Endothelial cell of umbilical vein (primary cell): ENCODE measurements at regions of chr2 and their contacts with region 1.

Region 1: GRCh38 chr2:215845839-215846586 is 167.3 kb downstream of the MREG start:
- DNase-seq: peak; percentile 58
- H3K4me3 ChIP-seq: peak overlapping the region in 2 of 3 experiments; percentile 13 to 91
- H3K27ac ChIP-seq: peak overlapping the region; percentile 98
- H3K4me1 ChIP-seq: peaks cover 87% of the 10 kb centered on the region
- H3K27me3 ChIP-seq: no peaks in the 10 kb centered on the region
- CTCF ChIP-seq: no peak
- POLR2A ChIP-seq: peak; percentile 8

Region 2: DNA sequence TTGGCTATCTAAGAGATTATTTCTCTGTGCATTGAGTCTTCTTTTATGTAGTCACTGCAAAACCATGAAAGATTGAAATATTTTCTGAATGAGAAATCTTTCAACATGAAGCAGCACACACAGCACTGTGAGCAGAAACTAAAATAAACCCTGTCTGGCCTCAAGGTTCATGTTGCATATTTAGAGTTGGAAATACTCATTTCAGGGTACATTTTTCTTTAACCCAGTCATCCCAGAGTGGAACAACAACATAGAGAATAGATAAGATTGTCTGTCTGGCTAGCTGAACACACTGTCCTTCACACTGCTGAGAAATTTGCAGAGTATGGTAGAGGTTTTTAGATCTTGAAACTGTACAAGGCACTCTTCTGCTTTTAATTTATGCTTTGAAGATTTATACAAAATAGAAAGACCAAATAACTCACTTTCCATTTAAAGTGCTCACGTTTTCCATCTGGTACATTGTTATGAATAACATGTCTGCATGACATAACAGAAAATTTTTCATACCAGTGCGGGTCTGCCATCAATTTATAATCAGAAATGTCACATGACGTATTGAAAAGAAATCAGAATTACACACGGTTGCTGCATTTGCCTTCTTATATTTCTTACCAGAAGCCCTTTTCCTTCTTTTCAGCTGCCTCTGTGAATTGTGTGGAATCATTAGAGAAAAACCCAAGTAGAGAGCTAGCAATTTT is 385.2 kb before region 1 on chr2:
- CTCF ChIA-PET with region 1: no interaction called
- POLR2A ChIA-PET with region 1: no interaction called
- dilution Hi-C with region 1: no loop called
- intact Hi-C with region 1: loop called (anchors 1 kb)
- DNase-seq: peak; percentile 72
- H3K4me3 ChIP-seq: no peak overlapping the region
- H3K27ac ChIP-seq: peak overlapping the region; percentile 80
- H3K4me1 ChIP-seq: peaks cover 43% of the 10 kb centered on the region
- H3K27me3 ChIP-seq: no peaks in the 10 kb centered on the region
- CTCF ChIP-seq: no peak
- POLR2A ChIP-seq: no peak

Region 3: GRCh38 chr2:215601990-215602721 is 243.9 kb before region 1 on chr2:
- CTCF ChIA-PET with region 1: no interaction called
- POLR2A ChIA-PET with region 1: no interaction called
- dilution Hi-C with region 1: no loop called
- intact Hi-C with region 1: loop called (anchors 2 kb)
- DNase-seq: peak; percentile 97
- H3K4me3 ChIP-seq: peak overlapping the region in 1 of 3 experiments; percentile 19
- H3K27ac ChIP-seq: peak overlapping the region; percentile 85
- H3K4me1 ChIP-seq: peaks cover 24% of the 10 kb centered on the region
- H3K27me3 ChIP-seq: no peaks in the 10 kb centered on the region
- CTCF ChIP-seq: no peak
- POLR2A ChIP-seq: peak; percentile 62

Region 4: DNA sequence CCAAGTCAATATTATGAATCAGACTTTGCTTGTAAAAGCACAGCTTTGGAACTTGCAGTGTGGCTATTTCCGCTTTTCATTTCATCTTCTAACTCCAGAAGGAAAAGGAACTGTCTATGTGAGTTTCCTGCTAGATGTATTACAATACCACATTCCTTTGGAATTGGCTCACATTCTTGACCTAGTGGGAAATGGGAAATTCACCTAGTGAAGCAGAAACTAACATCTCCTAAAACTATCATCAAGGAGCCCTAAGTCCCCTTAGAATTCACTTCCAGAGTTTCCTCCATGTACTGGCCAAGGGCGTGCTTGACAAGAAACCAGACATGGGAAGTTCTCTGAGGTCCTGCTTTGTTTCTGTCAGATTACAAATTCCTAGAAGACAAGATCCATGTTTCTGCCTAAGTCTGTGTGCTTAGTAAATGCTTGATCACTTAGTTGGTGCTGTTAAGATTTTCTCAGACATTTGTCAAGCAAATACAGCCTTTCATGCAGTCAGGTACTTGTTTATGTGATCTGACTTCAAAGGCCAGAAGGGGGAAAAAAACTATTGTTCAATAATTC is 134.5 kb before region 1 on chr2:
- CTCF ChIA-PET with region 1: no interaction called
- POLR2A ChIA-PET with region 1: interaction called, 3 read pairs
- dilution Hi-C with region 1: no loop called
- intact Hi-C with region 1: loop called (anchors 1 kb)
- DNase-seq: peak; percentile 92
- H3K4me3 ChIP-seq: no peak overlapping the region
- H3K27ac ChIP-seq: peak overlapping the region; percentile 98
- H3K4me1 ChIP-seq: peaks cover 51% of the 10 kb centered on the region
- H3K27me3 ChIP-seq: no peaks in the 10 kb centered on the region
- CTCF ChIP-seq: no peak
- POLR2A ChIP-seq: peak; percentile 82

Region 5: GRCh38 chr2:215758691-215759090 is 87.3 kb before region 1 on chr2:
- CTCF ChIA-PET with region 1: no interaction called
- POLR2A ChIA-PET with region 1: interaction called, 6 read pairs
- dilution Hi-C with region 1: no loop called
- intact Hi-C with region 1: loop called (anchors 1 kb)
- DNase-seq: peak; percentile 87
- H3K4me3 ChIP-seq: no peak overlapping the region
- H3K27ac ChIP-seq: peak overlapping the region; percentile 69
- H3K4me1 ChIP-seq: peaks cover 39% of the 10 kb centered on the region
- H3K27me3 ChIP-seq: no peaks in the 10 kb centered on the region
- CTCF ChIP-seq: no peak
- POLR2A ChIP-seq: no peak

Region 6: GRCh38 chr2:215828517-215829184 is 17.4 kb before region 1 on chr2:
- CTCF ChIA-PET with region 1: interaction called, 10 read pairs
- POLR2A ChIA-PET with region 1: interaction called, 5 read pairs
- dilution Hi-C with region 1: no loop called
- intact Hi-C with region 1: loop called (anchors 1 kb)
- DNase-seq: peak; percentile 52
- H3K4me3 ChIP-seq: no peak overlapping the region
- H3K27ac ChIP-seq: no peak overlapping the region
- H3K4me1 ChIP-seq: peaks cover 47% of the 10 kb centered on the region
- H3K27me3 ChIP-seq: no peaks in the 10 kb centered on the region
- CTCF ChIP-seq: peak; percentile 49 to 62
- POLR2A ChIP-seq: no peak

Region 7: DNA sequence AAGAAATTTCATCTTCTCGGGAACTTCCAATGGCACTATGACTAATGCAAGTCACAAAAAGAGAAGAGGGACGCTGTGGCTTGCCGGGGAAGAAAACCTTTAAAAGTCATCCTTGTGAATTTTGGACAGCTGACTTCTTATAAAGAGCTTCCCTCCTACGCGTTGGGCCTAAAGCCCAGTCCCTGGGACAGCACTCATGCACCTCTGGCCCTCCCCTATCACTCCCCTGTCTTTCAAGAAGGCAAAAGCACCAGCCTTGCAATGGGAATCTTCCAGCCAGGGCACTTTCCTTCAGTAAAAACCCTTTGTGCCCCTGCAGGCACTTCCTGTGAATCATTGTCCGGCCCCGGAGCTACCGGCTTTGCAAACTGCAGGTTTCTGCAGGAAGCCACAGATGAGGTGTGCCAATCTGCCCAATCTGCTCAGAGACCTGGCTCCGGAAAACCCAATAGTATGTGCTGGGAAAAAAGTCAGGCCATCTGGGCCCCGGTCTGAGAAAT is 160.2 kb after region 1 on chr2:
- CTCF ChIA-PET with region 1: no interaction called
- POLR2A ChIA-PET with region 1: no interaction called
- dilution Hi-C with region 1: no loop called
- intact Hi-C with region 1: no loop called
- DNase-seq: peak; percentile 33
- H3K4me3 ChIP-seq: no peak overlapping the region
- H3K27ac ChIP-seq: no peak overlapping the region
- H3K4me1 ChIP-seq: peaks cover 8% of the 10 kb centered on the region
- H3K27me3 ChIP-seq: peaks cover 0 to 2% of the 10 kb centered on the region in 2 experiments
- CTCF ChIP-seq: no peak
- POLR2A ChIP-seq: no peak